Motor neuron (in vitro differentiated cells): ENCODE measurements at regions of chr1 and their contacts with region 1.

Region 1: GRCh38 chr1:180470031-180470430 is 32.3 kb downstream of the ACBD6 start:
- ATAC-seq: no peak
- H3K4me3 ChIP-seq: no peak overlapping the region
- H3K27ac ChIP-seq: no peak overlapping the region
- H3K4me1 ChIP-seq: peaks cover 0 to 3% of the 10 kb centered on the region in 2 donors

Region 2: DNA sequence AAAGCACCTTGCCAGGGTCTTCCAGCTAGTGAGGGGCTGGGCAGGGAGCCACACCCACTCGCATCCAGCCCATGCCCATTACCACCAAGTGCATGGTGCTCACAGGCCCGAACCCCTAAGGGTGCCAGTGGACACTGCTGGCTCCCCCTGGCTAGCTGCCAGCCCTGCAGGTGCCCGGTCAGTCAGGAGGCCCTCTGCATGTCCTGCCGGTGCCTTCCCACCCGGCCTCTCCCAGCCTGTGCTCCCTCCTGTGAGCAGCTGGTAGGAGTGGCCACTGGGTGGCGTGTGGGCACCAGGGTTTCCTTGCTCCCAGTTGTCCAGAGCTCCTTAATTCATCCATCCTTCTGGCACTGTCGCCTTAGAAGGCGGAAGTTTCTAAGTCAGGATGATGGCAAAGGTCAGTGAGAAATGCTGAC is 281.9 kb before region 1 on chr1:
- in situ Hi-C with region 1: loop called in 1 of 9 experiments (anchors 10 kb)
- ATAC-seq: peak; percentile 86 to 99 (median 96)
- H3K4me3 ChIP-seq: no peak overlapping the region
- H3K27ac ChIP-seq: no peak overlapping the region
- H3K4me1 ChIP-seq: peaks cover 3 to 5% of the 10 kb centered on the region in 2 donors

Region 3: DNA sequence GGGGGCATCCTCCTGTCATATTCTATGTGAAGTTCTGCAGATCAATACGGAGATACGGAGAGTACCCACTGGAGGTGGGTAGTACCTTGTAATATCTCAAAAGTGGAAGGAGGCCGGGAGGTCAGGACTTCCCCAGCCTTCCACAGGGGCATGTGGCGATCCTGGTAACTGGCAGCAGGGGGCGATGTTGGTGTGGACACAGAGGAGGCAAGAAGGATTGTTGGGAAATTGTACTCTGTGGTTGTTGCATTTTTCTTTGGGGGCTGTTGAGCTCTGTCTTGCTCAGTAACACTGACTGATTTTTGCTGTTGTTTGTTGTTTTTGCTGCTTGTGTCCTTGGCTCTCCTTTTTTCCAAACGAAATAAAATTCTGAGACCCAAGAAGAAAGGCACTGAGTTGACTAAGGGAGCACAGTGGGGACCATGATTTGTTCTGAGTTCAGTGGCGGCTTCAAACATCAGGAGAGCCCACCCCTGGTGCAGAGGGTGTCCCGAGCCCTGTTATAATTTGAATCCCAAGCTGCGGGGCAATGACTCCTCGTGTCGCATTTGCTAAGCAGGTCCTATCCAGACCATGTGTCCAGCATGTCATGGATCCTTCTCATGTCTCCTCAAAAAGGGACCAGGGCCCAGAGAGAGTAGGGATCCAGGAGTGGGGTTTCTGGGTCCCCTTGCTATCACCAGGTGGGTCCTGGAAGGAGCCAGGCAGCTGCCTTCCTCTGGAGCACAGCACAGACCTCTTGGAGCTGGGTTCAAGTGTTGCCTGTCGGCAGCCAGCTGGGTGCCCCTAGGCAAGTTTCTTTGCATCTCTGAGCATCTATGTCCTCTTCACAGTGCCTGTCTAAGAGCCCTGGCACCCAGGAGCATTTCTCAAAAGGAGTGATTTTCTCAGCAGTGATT is 217.1 kb before region 1 on chr1:
- in situ Hi-C with region 1: loop called in 3 of 9 experiments (anchors 10 to 25 kb)
- ATAC-seq: peak in 3 of 8 experiments; percentile 64 to 79 (median 74)
- H3K4me3 ChIP-seq: no peak overlapping the region
- H3K27ac ChIP-seq: no peak overlapping the region
- H3K4me1 ChIP-seq: peaks cover 48% of the 10 kb centered on the region in 2 donors

Region 4: DNA sequence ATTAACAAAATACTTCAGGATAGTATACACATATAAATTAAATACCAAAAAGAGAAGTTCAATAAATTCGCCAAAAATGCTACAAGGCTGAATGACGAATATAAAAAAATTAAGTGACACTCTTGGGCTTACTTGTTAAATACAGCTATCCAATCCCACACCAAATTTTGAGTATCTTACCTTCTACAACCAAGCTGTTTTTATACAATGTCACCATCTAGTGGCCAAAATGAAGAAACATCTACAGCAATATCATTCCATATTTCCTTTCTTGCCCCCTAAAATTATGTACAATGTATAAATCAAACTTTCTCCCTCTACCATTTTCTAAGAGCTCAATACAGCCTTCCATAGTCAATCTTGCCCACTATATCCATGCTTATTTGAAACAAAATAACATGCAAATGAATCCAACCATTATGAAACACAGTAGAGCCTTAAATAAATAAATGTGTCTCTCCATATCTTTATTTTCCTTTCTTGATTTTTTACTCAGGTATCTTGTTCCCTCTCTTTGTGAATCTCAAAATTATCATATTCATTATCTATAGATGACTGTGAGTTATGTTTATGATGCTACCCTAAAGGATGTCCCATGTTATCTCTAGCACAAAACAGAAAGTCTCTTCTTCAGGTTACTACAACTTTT is 53.9 kb before region 1 on chr1:
- in situ Hi-C with region 1: loop called in 1 of 9 experiments (anchors 10 kb)
- ATAC-seq: peak in 3 of 8 experiments; percentile 53 to 59 (median 58)
- H3K4me3 ChIP-seq: no peak overlapping the region
- H3K27ac ChIP-seq: no peak overlapping the region
- H3K4me1 ChIP-seq: no peaks in the 10 kb centered on the region

Region 5: GRCh38 chr1:180566026-180566425 is 96.0 kb after region 1 on chr1:
- in situ Hi-C with region 1: no loop called
- ATAC-seq: peak in 3 of 8 experiments; percentile 30 to 44 (median 37)
- H3K4me3 ChIP-seq: no peak overlapping the region
- H3K27ac ChIP-seq: no peak overlapping the region
- H3K4me1 ChIP-seq: peaks cover 9 to 23% of the 10 kb centered on the region in 2 donors

Region 6: DNA sequence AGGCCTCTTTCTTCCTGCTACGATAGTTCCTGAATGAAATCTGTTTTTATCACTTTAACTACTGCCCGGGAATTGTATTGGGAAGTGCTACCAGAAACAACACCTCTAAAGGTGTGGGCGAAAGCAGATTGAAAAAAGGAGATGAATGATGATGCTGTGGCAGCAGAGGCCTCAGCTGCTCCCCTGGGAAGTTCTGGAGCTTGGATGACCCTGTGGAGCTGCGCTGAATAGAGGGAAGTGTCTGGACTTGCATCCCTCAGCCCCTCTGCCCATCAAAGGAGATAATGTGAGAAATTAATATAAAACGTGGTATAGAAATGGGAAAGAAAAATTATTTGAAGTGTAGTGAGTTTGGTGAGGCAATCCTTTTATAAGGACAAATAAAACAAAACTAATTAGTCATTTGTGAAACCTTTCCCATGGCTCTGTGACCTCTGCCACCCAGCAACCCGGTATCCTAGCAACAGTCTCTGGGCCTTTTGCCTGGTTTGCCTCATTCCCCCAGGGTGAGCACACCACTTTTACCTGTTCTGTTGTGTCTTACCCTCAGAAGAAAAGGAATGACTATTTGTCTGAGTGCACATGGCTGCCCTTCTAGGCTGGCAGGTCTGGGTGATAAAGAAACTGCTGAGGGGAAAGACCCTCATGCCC is 110.1 kb after region 1 on chr1:
- in situ Hi-C with region 1: no loop called
- ATAC-seq: peak in 5 of 8 experiments; percentile 85 to 96 (median 95)
- H3K4me3 ChIP-seq: no peak overlapping the region
- H3K27ac ChIP-seq: peak overlapping the region; percentile 22 to 36
- H3K4me1 ChIP-seq: peaks cover 20 to 25% of the 10 kb centered on the region in 2 donors